ENCODE measurements at regions of chr18 and their contacts with region 1.

Region 1: GRCh38 chr18:41034413-41034812 is 920.6 kb upstream of the PIK3C3 start:
- DNase-seq: no peak
- H3K4me3 ChIP-seq: no peak overlapping the region
- H3K27ac ChIP-seq: no peak overlapping the region
- H3K4me1 ChIP-seq: no peaks in the 10 kb centered on the region
- H3K27me3 ChIP-seq: no peaks in the 10 kb centered on the region
- CTCF ChIP-seq: no peak
- EP300 ChIP-seq: no peak
- POLR2A ChIP-seq: no peak

Region 2: DNA sequence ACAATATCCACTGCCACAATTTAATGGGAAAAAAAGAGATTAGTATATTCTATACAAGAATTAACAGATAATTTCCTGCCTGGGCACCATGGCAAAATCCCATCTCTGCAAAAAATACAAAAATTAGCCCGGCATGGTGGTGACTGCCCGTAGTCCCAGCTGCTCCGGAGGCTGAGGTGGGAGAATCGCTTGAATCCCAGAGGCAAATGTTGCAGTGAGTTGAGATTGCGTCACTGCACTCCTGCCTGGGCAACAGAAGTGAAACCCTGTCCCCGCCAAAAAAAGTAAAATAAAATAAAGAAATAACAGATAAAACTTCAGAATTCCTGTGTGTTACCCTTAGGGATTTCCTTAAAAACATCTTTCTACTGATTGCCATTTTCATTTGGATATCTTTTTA is 274.2 kb before region 1 on chr18:
- intact Hi-C with region 1: no loop called
- DNase-seq: no peak
- H3K4me3 ChIP-seq: no peak overlapping the region
- H3K27ac ChIP-seq: no peak overlapping the region
- H3K4me1 ChIP-seq: no peaks in the 10 kb centered on the region
- H3K27me3 ChIP-seq: no peaks in the 10 kb centered on the region
- CTCF ChIP-seq: no peak
- EP300 ChIP-seq: no peak
- POLR2A ChIP-seq: no peak

Region 3: GRCh38 chr18:41021089-41021488 is 13.3 kb before region 1 on chr18:
- intact Hi-C with region 1: no loop called
- DNase-seq: no peak
- H3K4me3 ChIP-seq: no peak overlapping the region
- H3K27ac ChIP-seq: no peak overlapping the region
- H3K4me1 ChIP-seq: no peaks in the 10 kb centered on the region
- H3K27me3 ChIP-seq: no peaks in the 10 kb centered on the region
- CTCF ChIP-seq: no peak
- EP300 ChIP-seq: no peak
- POLR2A ChIP-seq: no peak

Region 4: DNA sequence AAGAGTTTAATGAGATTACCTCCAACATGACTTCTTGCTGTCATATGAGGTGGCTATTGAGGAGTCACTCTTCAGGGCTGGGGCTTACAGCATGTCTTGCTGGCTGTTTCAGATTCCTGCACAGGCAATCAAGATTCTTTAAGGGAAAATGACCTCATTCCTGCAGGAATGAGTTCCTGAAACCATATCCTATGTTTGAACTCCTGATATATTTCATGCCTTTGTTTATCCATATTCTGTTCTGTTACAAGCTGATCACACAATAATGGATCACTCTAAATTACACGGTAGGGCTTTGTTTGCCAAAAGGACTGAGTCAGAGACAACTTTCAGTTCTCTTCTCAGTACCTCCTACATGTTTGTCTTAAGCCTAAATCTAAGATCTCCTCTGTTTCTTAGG is 40.8 kb after region 1 on chr18:
- intact Hi-C with region 1: loop called in 1 of 4 experiments (anchors 5 kb)
- DNase-seq: no peak
- H3K4me3 ChIP-seq: no peak overlapping the region
- H3K27ac ChIP-seq: no peak overlapping the region
- H3K4me1 ChIP-seq: no peaks in the 10 kb centered on the region
- H3K27me3 ChIP-seq: no peaks in the 10 kb centered on the region
- CTCF ChIP-seq: no peak
- EP300 ChIP-seq: no peak
- POLR2A ChIP-seq: no peak

Region 5: DNA sequence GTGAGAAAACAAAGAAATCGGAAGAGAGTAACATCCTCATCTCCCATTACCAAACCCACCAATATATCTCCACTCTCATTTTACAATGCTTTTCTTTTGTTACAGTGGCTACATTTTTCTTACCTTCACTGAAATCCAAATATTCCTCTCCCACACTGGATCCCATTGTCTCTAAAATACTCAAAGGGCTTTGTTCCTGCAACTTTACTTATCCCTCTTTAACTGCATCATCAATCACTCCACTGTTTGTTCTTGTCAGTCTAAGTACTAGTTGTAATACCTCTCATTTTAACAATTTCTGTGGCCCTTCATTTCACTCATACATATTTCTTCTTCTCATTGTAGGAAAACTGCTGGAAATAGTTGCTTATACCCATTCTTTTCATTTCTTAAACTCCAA is 456.4 kb after region 1 on chr18:
- intact Hi-C with region 1: no loop called
- DNase-seq: no peak
- H3K4me3 ChIP-seq: no peak overlapping the region
- H3K27ac ChIP-seq: no peak overlapping the region
- H3K4me1 ChIP-seq: no peaks in the 10 kb centered on the region
- H3K27me3 ChIP-seq: no peaks in the 10 kb centered on the region
- CTCF ChIP-seq: no peak
- EP300 ChIP-seq: no peak
- POLR2A ChIP-seq: no peak

Measured in ovary (tissue), 10 donors.